ENCODE measurements at regions of chr19 and their contacts with region 1.

Region 1: DNA sequence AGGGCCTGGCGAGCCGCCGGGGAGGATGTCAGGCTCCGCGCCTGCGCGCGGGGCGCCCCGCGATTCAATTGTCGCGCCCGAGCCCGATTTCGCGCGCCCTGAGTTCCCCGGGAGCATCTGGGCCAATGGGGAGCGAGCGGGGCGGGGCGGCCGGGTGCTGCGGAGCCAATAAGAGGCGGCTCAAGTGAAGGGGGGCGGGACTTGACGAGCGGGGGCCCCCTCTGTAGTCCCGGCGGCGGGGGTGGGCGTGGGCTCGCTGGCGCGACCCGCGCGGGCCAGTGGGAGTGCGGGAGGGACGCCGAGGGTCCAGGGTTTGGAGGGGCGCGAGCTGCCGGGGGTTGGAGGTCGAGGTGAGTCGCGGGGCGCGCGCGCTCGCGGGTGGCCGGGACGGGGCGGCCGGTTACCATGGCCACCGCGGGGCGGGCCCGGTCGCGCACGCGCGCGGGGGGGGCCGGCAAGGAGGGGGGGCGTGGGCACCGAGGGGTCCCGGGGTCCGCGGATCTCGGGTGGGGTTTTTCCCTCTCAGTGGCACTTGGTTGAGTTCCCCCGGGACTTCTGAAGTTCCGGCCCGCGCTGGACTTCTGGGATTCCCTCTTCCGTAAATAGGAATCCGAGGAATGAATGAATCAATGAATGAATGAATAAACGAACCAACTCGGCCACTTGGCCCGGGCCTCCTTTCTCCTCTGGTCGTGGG is 744 bp downstream of the UHRF1 start:
- DNase-seq: peak; percentile 84 to 95 (median 88)
- ATAC-seq: peak; percentile 93 to 98 (median 96)
- H3K4me3 ChIP-seq: peak overlapping the region; percentile 44 to 72 (median 53)
- H3K27ac ChIP-seq: no peak overlapping the region
- H3K4me1 ChIP-seq: peaks cover 0 to 11% (median 9%) of the 10 kb centered on the region in 3 donors
- H3K27me3 ChIP-seq: no peaks in the 10 kb centered on the region
- CTCF ChIP-seq: no peak

Region 2: GRCh38 chr19:4815426-4816201 is 94.4 kb before region 1 on chr19:
- intact Hi-C with region 1: loop called in 1 of 3 experiments (anchors 5 kb)
- DNase-seq: peak; percentile 80 to 92 (median 86)
- ATAC-seq: peak; percentile 89 to 96 (median 93)
- H3K4me3 ChIP-seq: peak overlapping the region in 2 of 4 donors; percentile 5 to 27
- H3K27ac ChIP-seq: no peak overlapping the region
- H3K4me1 ChIP-seq: peaks cover 0 to 9% (median 0%) of the 10 kb centered on the region in 3 donors
- H3K27me3 ChIP-seq: no peaks in the 10 kb centered on the region
- CTCF ChIP-seq: no peak

Region 3: GRCh38 chr19:4870025-4870700 is 39.9 kb before region 1 on chr19:
- intact Hi-C with region 1: loop called in 1 of 3 experiments (anchors 5 kb)
- DNase-seq: peak in 3 of 6 donors; percentile 32 to 50 (median 44)
- ATAC-seq: peak in 2 of 4 donors; percentile 6 to 19
- H3K4me3 ChIP-seq: no peak overlapping the region
- H3K27ac ChIP-seq: no peak overlapping the region
- H3K4me1 ChIP-seq: peaks cover 0 to 4% (median 0%) of the 10 kb centered on the region in 3 donors
- H3K27me3 ChIP-seq: no peaks in the 10 kb centered on the region
- CTCF ChIP-seq: no peak

Measured in pancreas (tissue), 10 donors.